Calu3 (cell line): ENCODE measurements at regions of chr2 and their contacts with region 1.

Region 1: GRCh38 chr2:196291873-196292800 is 120.8 kb upstream of the STK17B start:
- DNase-seq: peak; percentile 91
- H3K4me3 Mint-ChIP-seq: peak overlapping the region; percentile 49
- H3K27ac Mint-ChIP-seq: peak overlapping the region; percentile 99
- H3K4me1 Mint-ChIP-seq: peaks cover 56% of the 10 kb centered on the region
- H3K27me3 Mint-ChIP-seq: no peaks in the 10 kb centered on the region
- CTCF ChIP-seq: no peak

Region 2: GRCh38 chr2:196018037-196018436 is 274.1 kb before region 1 on chr2:
- CTCF ChIA-PET with region 1: no interaction called
- intact Hi-C with region 1: no loop called
- DNase-seq: no peak
- H3K4me3 Mint-ChIP-seq: no peak overlapping the region
- H3K27ac Mint-ChIP-seq: no peak overlapping the region
- H3K4me1 Mint-ChIP-seq: no peaks in the 10 kb centered on the region
- H3K27me3 Mint-ChIP-seq: no peaks in the 10 kb centered on the region
- CTCF ChIP-seq: no peak

Region 3: DNA sequence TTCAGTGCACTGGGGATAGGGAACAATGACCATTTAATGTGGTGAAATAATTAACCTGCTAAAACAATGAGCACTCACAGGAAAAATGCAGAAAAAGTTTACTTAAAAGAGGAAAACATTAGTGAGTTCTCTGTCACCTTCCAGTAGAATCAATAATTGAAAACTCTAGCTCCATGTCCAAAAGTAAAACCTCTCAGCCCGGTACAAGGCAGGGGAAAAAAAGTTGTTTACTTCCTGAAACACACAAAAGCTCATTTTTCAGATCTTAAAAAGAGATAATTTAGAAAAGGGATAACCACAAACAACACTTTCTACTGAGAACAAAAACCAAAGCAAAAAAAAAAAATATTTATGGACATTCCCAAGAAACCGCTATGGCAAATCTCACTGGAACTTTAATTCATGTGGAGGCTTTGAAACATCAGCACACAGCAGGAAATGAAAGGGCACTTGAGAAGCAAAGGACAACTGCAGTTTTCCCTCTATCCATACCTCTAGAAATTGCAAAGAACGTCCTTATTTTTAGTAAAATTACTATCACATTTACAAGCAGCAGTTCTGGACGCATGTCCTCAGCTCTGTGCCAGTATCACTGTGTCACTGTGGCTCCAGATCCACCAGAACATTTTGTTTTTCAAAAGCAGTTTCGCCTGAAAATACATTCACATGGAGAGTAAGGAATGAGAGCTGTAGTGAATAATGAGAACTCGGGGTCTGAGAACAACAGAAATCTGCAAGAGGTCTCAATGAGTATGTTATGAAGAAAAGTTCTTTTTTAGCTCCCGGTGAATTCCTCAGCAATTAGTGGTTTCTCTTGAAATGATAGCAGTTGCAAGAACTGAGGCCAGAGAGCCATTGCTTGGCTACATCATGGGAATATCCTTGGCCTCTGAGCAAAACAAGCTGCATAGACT is 178.8 kb before region 1 on chr2:
- CTCF ChIA-PET with region 1: no interaction called
- intact Hi-C with region 1: loop called (anchors 1 kb)
- DNase-seq: peak; percentile 19
- H3K4me3 Mint-ChIP-seq: peak overlapping the region; percentile 56
- H3K27ac Mint-ChIP-seq: peak overlapping the region; percentile 95
- H3K4me1 Mint-ChIP-seq: peaks cover 20% of the 10 kb centered on the region
- H3K27me3 Mint-ChIP-seq: no peaks in the 10 kb centered on the region
- CTCF ChIP-seq: no peak

Region 4: DNA sequence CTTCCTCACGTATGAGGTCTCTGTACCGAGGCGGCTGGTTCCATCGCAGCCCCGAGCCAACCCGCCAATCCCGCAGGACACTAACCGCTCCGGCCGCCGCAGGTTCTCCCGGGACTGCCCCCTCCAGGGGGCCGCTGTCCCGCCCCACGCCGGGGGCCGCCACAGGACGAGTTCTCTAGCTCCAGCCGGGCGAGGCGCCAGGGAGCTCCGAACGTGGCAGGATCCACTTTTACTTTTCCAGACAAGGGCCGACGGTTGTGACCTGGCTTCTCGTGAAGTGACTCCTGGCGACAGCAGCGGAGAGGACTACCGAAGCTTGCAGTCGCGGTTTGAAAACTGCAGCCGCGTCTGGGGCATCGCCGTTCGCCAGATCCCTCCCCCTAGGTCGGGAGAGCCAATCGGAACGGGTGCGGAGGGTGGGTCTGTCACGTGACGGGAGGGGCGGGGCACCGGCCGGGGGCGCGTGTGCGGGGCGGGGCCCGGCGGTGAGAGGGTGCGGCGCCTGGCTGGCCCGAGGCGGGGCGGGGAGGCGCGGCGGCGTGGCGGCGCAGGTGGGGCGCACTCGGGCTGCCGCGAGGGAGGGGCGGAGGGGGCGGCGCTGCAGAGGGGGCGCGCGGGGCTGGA is 120.8 kb before region 1 on chr2 and contains the start of gene STK17B:
- CTCF ChIA-PET with region 1: interaction called, 4 read pairs
- intact Hi-C with region 1: loop called (anchors 5 kb)
- DNase-seq: peak; percentile 95
- H3K4me3 Mint-ChIP-seq: peak within 1 kb of the TSS; percentile 82
- H3K27ac Mint-ChIP-seq: peak within 1 kb of the TSS; percentile 83
- H3K4me1 Mint-ChIP-seq: peaks cover 31% of the 10 kb centered on the region
- H3K27me3 Mint-ChIP-seq: no peaks in the 10 kb centered on the region
- CTCF ChIP-seq: no peak
- total RNA-seq, gene STK17B: 32.3 and 38.5 TPM in 2 replicates

Region 5: GRCh38 chr2:196205881-196206435 is 86.2 kb before region 1 on chr2:
- CTCF ChIA-PET with region 1: no interaction called
- intact Hi-C with region 1: no loop called
- DNase-seq: no peak
- H3K4me3 Mint-ChIP-seq: no peak overlapping the region
- H3K27ac Mint-ChIP-seq: no peak overlapping the region
- H3K4me1 Mint-ChIP-seq: peaks cover 16% of the 10 kb centered on the region
- H3K27me3 Mint-ChIP-seq: no peaks in the 10 kb centered on the region
- CTCF ChIP-seq: no peak

Region 6: DNA sequence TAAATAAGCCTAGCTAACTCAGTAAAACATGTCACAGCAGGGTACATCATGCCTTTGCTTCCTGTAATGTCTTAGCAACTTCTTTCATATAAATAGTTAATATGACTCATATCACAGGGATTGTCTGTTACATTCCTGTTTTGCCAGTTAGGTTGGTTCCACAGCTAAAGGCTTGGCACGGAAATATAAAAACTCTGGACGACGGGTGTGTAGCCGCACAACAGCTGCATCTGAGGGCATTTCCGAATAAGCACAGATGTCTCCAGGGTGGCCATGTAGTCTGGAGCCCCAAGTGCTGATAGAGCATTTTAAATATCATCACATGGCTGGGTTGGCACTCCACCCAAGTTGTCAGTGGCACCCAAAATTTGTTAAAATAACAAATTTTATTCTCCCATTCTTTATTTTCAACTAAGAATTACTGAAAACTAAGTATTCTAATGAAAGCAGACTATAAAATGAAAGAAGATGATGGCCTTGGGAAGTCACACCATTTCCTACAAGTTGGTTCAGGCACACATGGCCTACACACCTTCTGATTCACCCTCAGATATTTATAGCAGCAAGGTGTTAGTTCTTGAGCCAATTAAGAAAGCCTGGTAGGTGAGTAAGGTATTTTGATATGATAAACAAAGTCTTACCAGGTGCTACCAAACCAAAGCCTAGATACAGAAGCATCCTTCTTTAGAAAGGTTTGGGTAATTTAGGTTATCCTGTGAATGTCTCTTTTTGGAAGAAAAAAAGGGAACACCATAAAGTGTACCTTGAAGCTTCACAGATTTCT is 58.9 kb before region 1 on chr2:
- CTCF ChIA-PET with region 1: no interaction called
- intact Hi-C with region 1: loop called (anchors 1 kb)
- DNase-seq: peak; percentile 72
- H3K4me3 Mint-ChIP-seq: peak overlapping the region; percentile 12
- H3K27ac Mint-ChIP-seq: peak overlapping the region; percentile 84
- H3K4me1 Mint-ChIP-seq: peaks cover 23% of the 10 kb centered on the region
- H3K27me3 Mint-ChIP-seq: no peaks in the 10 kb centered on the region
- CTCF ChIP-seq: no peak

Region 7: GRCh38 chr2:196639180-196640030 is 347.3 kb after region 1 on chr2 and contains the start of gene CCDC150:
- CTCF ChIA-PET with region 1: no interaction called
- intact Hi-C with region 1: loop called (anchors 1 kb)
- DNase-seq: peak; percentile 97
- H3K4me3 Mint-ChIP-seq: peak within 1 kb of the TSS; percentile 98
- H3K27ac Mint-ChIP-seq: peak within 1 kb of the TSS; percentile 93
- H3K4me1 Mint-ChIP-seq: peaks cover 23% of the 10 kb centered on the region
- H3K27me3 Mint-ChIP-seq: no peaks in the 10 kb centered on the region
- CTCF ChIP-seq: no peak
- total RNA-seq, gene CCDC150: 20.2 and 21.7 TPM in 2 replicates

Region 8: GRCh38 chr2:196750982-196751635 is 459.0 kb after region 1 on chr2:
- CTCF ChIA-PET with region 1: no interaction called
- intact Hi-C with region 1: loop called (anchors 10 kb)
- DNase-seq: peak; percentile 58
- H3K4me3 Mint-ChIP-seq: no peak overlapping the region
- H3K27ac Mint-ChIP-seq: no peak overlapping the region
- H3K4me1 Mint-ChIP-seq: no peaks in the 10 kb centered on the region
- H3K27me3 Mint-ChIP-seq: no peaks in the 10 kb centered on the region
- CTCF ChIP-seq: peak; percentile 74